ENCODE measurements at regions of chrX and their contacts with region 1.

Region 1: GRCh38 chrX:15471016-15471415 is 22.1 kb downstream of the PIR start:
- DNase-seq: no peak
- H3K4me3 ChIP-seq: no peak overlapping the region
- H3K27ac ChIP-seq: peak overlapping the region; percentile 25
- H3K4me1 ChIP-seq: peaks cover 26% of the 10 kb centered on the region
- H3K27me3 ChIP-seq: no peaks in the 10 kb centered on the region
- CTCF ChIP-seq: peak; percentile 79 to 83 (median 82)

Region 2: GRCh38 chrX:14554131-14554715 is 916.8 kb before region 1 on chrX:
- dilution Hi-C with region 1: no loop called
- DNase-seq: no peak
- H3K4me3 ChIP-seq: no peak overlapping the region
- H3K27ac ChIP-seq: no peak overlapping the region
- H3K4me1 ChIP-seq: no peaks in the 10 kb centered on the region
- H3K27me3 ChIP-seq: no peaks in the 10 kb centered on the region
- CTCF ChIP-seq: no peak

Region 3: DNA sequence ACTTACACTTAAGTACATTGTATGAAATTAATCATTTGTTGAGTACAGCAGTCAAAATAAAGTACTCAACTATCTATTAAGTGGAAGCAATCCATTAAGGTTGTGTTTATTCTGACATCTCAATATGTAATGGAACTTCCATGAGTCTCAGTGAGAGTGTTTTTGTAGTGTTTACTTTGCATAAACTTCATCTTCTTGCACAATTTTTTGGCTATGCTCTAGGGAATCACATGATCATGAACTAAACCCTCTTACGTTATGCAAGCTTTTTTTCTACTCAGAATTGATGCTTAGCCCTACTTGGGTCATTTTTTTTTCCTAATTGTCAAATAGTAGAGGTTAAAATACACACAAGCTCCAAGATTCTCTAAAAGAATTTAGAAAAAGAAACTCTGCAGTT is 114.6 kb before region 1 on chrX:
- dilution Hi-C with region 1: loop called (anchors 25 kb)
- DNase-seq: no peak
- H3K4me3 ChIP-seq: no peak overlapping the region
- H3K27ac ChIP-seq: no peak overlapping the region
- H3K4me1 ChIP-seq: no peaks in the 10 kb centered on the region
- H3K27me3 ChIP-seq: no peaks in the 10 kb centered on the region
- CTCF ChIP-seq: no peak

Region 4: GRCh38 chrX:15674841-15675489 is 203.9 kb after region 1 on chrX:
- dilution Hi-C with region 1: loop called (anchors 25 kb)
- DNase-seq: peak; percentile 94
- H3K4me3 ChIP-seq: peak overlapping the region; percentile 71 to 77 (median 75)
- H3K27ac ChIP-seq: peak overlapping the region; percentile 99
- H3K4me1 ChIP-seq: peaks cover 18% of the 10 kb centered on the region
- H3K27me3 ChIP-seq: no peaks in the 10 kb centered on the region
- CTCF ChIP-seq: no peak